GM23248 (cell line): ENCODE measurements at regions of chr15 and their contacts with region 1.

Region 1: DNA sequence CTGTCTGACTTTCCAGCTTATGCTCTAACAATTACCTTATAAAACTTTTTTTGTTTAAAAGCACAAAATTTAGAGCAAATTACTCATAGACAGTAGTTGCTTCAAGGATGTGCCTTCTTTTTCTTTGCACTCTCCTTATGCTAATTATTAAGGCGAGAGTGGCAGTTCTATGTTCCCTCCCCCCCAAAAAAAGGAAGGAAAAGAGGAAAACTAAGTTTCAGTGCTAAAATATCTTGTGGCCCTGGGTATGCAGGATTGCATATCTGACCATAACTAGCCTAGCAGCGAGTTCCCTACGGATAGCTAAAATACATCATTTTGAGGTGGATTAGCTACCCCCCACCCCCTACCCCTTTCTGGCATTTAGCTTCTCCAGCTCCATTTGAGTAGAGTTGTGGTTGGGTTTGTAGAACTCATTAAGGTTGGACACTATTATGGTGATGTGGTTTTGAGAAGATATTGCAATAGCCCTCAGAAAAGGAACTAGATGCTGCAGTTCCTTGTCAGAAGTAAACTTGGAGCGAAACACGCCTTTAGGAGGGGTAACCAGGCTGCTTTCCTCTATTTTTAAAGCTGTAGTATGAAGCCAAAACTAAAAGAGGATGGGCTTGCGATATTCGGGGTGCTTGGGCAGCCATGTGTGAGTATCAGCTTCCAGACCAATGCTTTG is 174.6 kb downstream of the AKAP13 start:
- DNase-seq: no peak
- H3K4me3 ChIP-seq: no peak overlapping the region
- H3K27ac ChIP-seq: no peak overlapping the region
- H3K4me1 ChIP-seq: no peaks in the 10 kb centered on the region
- H3K27me3 ChIP-seq: no peaks in the 10 kb centered on the region

Region 2: DNA sequence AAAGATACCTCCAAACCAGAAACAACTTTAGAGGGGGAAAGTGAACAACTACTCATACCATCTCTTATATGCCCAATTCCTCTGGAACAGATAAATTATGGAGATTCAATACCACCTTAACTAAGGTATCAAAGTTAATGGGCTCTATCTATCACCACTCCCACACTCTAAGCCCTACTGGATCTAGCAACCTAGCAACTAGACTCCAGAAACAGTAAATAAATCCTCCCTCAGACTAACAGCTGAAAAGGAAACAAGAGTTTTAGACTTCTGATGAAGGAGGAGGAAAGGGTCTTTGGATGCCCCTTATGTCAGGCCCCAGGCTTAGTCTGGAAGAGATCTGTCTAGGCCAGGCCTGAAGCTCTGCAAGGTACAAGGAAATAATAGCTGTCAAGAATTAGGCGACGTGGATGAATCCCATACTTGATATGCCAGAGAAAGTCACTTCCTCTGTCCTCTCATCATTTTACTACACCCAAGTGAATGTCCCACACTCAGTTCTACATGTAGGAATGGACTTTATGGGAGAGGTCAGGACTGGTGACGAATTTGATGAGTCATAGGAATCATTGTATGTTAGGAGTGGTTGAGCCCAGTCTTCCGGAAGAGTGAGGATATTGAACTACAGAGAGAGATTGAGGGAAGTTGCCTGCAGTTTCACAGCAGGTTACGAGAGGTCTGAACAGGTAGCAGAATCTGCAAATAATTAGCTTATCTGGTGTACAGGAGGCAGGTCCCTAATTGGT is 60.8 kb before region 1 on chr15:
- in situ Hi-C with region 1: loop called (anchors 10 kb)
- DNase-seq: peak; percentile 94
- H3K4me3 ChIP-seq: peak overlapping the region; percentile 32; the same call in 1 of the 2 replicates
- H3K27ac ChIP-seq: peak overlapping the region; percentile 94
- H3K4me1 ChIP-seq: peaks cover 11% of the 10 kb centered on the region
- H3K27me3 ChIP-seq: no peaks in the 10 kb centered on the region